ENCODE measurements at regions of chr17 and their contacts with region 1.

Region 1: DNA sequence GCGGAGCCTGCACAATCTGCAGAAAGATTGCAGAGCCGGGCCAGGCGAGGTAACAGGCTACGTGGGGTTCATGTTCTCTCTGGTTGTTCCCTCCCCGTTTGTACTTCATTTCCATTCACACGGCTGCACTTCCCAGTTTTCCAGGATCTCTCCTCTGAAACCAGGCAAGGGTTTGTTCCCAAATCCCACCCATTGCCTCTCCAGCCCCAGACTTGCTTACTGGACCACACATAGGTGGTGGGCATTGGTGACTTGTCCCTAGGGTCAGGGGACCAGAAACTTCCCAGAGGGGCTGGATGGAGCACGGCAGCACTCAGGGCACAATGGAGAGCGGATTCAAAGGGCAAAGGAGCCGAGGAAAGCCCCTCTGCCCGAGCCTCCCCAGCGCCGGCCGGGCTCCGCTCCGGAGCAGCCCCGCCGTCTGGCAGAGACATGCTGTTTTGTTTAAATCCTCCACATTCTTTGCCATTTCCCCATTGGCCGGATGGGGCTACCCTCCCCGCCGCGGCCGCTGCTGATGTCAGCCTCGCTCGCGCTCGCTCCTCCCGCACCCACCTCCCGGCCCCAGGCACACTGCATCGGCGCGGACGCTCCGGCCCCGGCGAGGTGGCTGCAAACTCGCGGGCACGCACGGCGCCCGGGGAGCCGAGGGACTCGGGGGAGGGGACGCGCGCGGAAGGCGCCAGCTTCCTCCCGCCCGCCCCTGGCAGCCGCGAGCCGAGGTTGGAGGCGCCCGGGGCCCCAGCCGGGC is at the start of gene PITPNC1:
- DNase-seq: peak; percentile 68
- ATAC-seq: peak; percentile 67
- H3K4me3 ChIP-seq: peak within 1 kb of the TSS; percentile 66 to 89
- H3K27ac ChIP-seq: peak within 1 kb of the TSS; percentile 73
- H3K4me1 ChIP-seq: peaks cover 26 to 49% of the 10 kb centered on the region in 2 experiments
- H3K27me3 ChIP-seq: no peaks in the 10 kb centered on the region
- CTCF ChIP-seq: no peak
- POLR2A ChIP-seq: peak; percentile 55
- RAD21 ChIP-seq: no peak
- total RNA-seq, gene PITPNC1: 41.9 TPM

Region 2: GRCh38 chr17:67421869-67422273 is 45.0 kb after region 1 on chr17:
- CTCF ChIA-PET with region 1: interaction called, 7 read pairs
- POLR2A ChIA-PET with region 1: interaction called, 11 read pairs
- RAD21 ChIA-PET with region 1: no interaction called
- intact Hi-C with region 1: loop called (anchors 5 kb)
- DNase-seq: peak; percentile 100
- ATAC-seq: peak; percentile 90
- H3K4me3 ChIP-seq: peak overlapping the region; percentile 0 to 31; a peak in 3 of 4 replicates
- H3K27ac ChIP-seq: peak overlapping the region; percentile 95
- H3K4me1 ChIP-seq: peaks cover 72 to 92% of the 10 kb centered on the region in 2 experiments
- H3K27me3 ChIP-seq: no peaks in the 10 kb centered on the region
- CTCF ChIP-seq: no peak
- POLR2A ChIP-seq: no peak
- RAD21 ChIP-seq: peak; percentile 57

Region 3: DNA sequence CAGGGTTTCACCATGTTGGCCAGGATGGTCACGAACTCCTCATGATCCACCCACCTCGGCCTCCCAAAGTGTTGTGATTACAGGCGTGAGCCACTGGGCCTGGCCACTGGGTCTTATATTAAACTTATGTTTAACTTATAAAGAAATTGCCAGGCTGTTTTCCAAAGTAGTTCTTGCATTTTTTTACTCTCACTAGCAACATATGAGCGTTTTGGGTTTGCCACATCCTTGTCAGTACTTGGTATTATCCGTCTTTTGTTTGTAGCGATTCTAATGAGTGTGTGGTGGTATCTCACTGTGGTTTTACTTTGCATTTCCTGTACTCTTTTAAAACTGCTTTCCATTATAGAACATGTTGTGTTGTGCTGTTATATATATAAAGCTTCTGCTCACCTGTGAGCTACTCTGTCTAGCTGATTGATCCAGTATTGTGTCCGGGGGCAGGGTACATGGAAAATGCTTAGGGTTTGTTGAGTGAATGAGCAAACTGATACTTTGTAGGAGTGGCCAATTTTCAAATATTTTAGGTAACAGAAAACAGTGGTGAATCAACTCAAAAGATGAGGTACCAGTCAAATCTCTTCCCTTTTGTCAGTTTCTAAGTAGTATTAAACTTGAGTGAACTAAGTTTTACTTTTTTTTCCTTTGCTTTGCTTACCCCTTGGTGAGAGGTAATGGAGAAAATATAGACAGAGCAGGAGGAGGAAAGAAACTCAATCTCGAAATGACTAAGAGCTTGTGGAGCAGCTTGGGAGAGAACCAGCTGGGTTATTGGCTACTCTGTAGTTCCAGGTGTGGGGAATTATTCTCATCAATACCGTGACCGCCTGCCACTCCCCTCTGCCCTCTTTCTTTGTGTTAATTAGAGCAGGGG is 76.0 kb after region 1 on chr17:
- CTCF ChIA-PET with region 1: no interaction called
- POLR2A ChIA-PET with region 1: no interaction called
- RAD21 ChIA-PET with region 1: no interaction called
- intact Hi-C with region 1: no loop called
- DNase-seq: no peak
- ATAC-seq: no peak
- H3K4me3 ChIP-seq: no peak overlapping the region
- H3K27ac ChIP-seq: no peak overlapping the region
- H3K4me1 ChIP-seq: no peaks in the 10 kb centered on the region
- H3K27me3 ChIP-seq: no peaks in the 10 kb centered on the region
- CTCF ChIP-seq: no peak
- POLR2A ChIP-seq: no peak
- RAD21 ChIP-seq: no peak

Region 4: DNA sequence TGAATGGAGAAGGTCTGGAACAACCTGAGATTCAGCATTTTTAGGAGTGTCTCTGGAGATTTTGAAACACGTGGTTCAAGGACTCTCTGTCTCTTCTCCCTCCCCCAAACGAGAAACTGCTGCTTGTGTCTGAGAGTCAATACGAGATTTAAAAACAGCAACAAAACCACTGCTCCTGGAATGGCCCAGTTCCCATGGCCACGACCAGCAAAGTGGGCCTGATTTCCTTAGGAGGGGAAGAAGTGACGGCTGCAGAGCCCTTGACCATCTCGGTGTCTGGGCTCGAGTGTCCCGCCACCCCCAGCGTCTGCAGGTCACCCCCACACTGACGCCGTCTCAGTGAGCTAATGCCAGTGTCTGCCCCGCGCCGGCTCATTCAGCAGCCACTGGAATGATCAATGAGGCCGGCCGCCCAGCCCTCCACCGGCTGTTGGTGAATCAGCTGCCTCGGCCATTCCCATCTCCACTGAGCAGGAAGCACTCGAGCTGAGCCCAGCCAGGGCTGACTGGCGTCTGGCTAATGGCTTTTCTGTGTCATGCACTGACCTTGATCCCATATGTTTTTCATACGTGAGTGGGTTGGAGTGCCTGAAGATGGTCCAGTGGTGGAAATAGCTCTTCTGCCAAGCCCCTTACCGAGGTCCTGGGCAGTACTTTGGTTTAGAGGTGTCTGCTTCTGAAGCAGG is 152.0 kb after region 1 on chr17:
- CTCF ChIA-PET with region 1: interaction called, 11 read pairs
- POLR2A ChIA-PET with region 1: interaction called, 3 read pairs
- RAD21 ChIA-PET with region 1: interaction called in 1 of 2 experiments, 3 read pairs
- intact Hi-C with region 1: no loop called
- DNase-seq: peak; percentile 84
- ATAC-seq: peak; percentile 99
- H3K4me3 ChIP-seq: peak overlapping the region; percentile 32 to 49
- H3K27ac ChIP-seq: peak overlapping the region; percentile 15
- H3K4me1 ChIP-seq: peaks cover 11 to 32% of the 10 kb centered on the region in 2 experiments
- H3K27me3 ChIP-seq: no peaks in the 10 kb centered on the region
- CTCF ChIP-seq: no peak
- POLR2A ChIP-seq: no peak
- RAD21 ChIP-seq: no peak; the same call in none of the 2 replicates

Region 5: GRCh38 chr17:67629971-67630320 is 253.0 kb after region 1 on chr17:
- CTCF ChIA-PET with region 1: interaction called, 9 read pairs
- POLR2A ChIA-PET with region 1: interaction called, 4 read pairs
- RAD21 ChIA-PET with region 1: interaction called in 1 of 2 experiments, 5 read pairs
- intact Hi-C with region 1: loop called (anchors 2 kb)
- DNase-seq: peak; percentile 23
- ATAC-seq: peak; percentile 76
- H3K4me3 ChIP-seq: no peak overlapping the region
- H3K27ac ChIP-seq: no peak overlapping the region
- H3K4me1 ChIP-seq: no peaks in the 10 kb centered on the region
- H3K27me3 ChIP-seq: no peaks in the 10 kb centered on the region
- CTCF ChIP-seq: peak; percentile 37 to 55 (median 52); a peak in 5 of 6 replicates
- POLR2A ChIP-seq: no peak
- RAD21 ChIP-seq: peak; percentile 65

Region 6: GRCh38 chr17:67717624-67718329 is 340.9 kb after region 1 on chr17 and contains the start of gene NOL11:
- CTCF ChIA-PET with region 1: no interaction called
- POLR2A ChIA-PET with region 1: no interaction called
- RAD21 ChIA-PET with region 1: no interaction called
- intact Hi-C with region 1: loop called (anchors 1 kb)
- DNase-seq: peak; percentile 99
- ATAC-seq: peak; percentile 98
- H3K4me3 ChIP-seq: peak within 1 kb of the TSS; percentile 83 to 94
- H3K27ac ChIP-seq: peak within 1 kb of the TSS; percentile 77
- H3K4me1 ChIP-seq: peaks cover 7 to 16% of the 10 kb centered on the region in 2 experiments; a peak in 3 of 4 replicates
- H3K27me3 ChIP-seq: no peaks in the 10 kb centered on the region
- CTCF ChIP-seq: peak; percentile 92 to 99 (median 96)
- POLR2A ChIP-seq: peak; percentile 95
- RAD21 ChIP-seq: peak; percentile 83
- total RNA-seq, gene NOL11: 118 TPM

Measured in HCT116 (cell line).